ENCODE measurements at regions of chr1 and their contacts with region 1.

Region 1: GRCh38 chr1:227999056-227999930 is 7.5 kb upstream of the WNT3A start:
- DNase-seq: peak; percentile 86 to 94 (median 92)
- H3K4me3 ChIP-seq: no peak overlapping the region
- H3K27ac ChIP-seq: no peak overlapping the region
- H3K4me1 ChIP-seq: peaks cover 0 to 2% (median under 1%) of the 10 kb centered on the region in 4 experiments
- H3K27me3 ChIP-seq: peaks cover 0 to 40% (median 24%) of the 10 kb centered on the region in 5 experiments

Region 2: GRCh38 chr1:228015796-228016510 is 16.7 kb after region 1 on chr1:
- CTCF ChIA-PET with region 1: interaction called, 10 read pairs
- POLR2A ChIA-PET with region 1: no interaction called
- DNase-seq: no peak
- H3K4me3 ChIP-seq: no peak overlapping the region
- H3K27ac ChIP-seq: no peak overlapping the region
- H3K4me1 ChIP-seq: peaks cover 0 to 10% (median 5%) of the 10 kb centered on the region in 4 experiments
- H3K27me3 ChIP-seq: peaks cover 0 to 21% (median 5%) of the 10 kb centered on the region in 5 experiments

Region 3: GRCh38 chr1:228090613-228091081 is 91.4 kb after region 1 on chr1:
- CTCF ChIA-PET with region 1: interaction called, 10 read pairs
- POLR2A ChIA-PET with region 1: no interaction called
- DNase-seq: no peak
- H3K4me3 ChIP-seq: peak overlapping the region in 2 of 7 experiments; percentile 25 to 57
- H3K27ac ChIP-seq: no peak overlapping the region
- H3K4me1 ChIP-seq: peaks cover 24 to 67% (median 59%) of the 10 kb centered on the region in 4 experiments
- H3K27me3 ChIP-seq: no peaks in the 10 kb centered on the region

Measured in common myeloid progenitor, CD34-positive (primary cell).